HepG2 (cell line): ENCODE measurements at regions of chr17 and their contacts with region 1.

Region 1: GRCh38 chr17:2821868-2822267 is 25.6 kb downstream of the RAP1GAP2 start:
- DNase-seq: no peak
- ATAC-seq: no peak
- H3K4me3 ChIP-seq: no peak overlapping the region
- H3K27ac ChIP-seq: no peak overlapping the region
- H3K4me1 ChIP-seq: no peaks in the 10 kb centered on the region
- H3K27me3 ChIP-seq: no peaks in the 10 kb centered on the region
- CTCF ChIP-seq: no peak
- EP300 ChIP-seq: no peak
- POLR2A ChIP-seq: no peak
- RAD21 ChIP-seq: no peak

Region 2: DNA sequence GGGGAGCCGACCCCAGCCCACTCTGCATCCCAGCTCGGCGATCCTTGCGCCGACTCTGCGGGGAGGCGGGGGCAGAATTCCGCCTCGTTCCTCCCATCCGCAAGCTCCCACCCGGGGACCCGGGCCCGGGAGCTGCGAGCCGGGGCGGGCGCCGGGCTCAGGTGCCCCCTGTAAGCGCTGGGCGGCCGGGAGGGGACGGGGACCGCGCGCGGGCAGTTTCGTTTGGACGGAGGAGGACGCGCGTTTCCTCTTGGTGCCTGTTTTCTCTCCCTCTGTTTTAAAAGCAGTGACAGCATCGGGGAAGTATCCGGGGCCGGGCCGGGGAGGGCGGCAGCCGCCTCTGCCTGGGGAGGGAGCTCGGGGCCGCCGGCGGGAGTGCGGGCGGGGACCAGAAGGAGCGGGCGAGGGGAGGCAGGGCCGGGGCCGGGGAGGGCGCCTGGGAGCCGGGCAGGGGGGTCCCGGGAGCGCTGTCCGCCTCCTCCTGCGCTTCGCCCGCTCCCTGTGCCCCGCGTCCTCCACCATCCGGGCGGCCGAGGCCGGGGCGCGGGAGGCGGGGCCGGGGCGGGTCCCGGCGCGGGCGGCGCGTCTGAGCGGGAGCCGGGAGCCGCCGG is 31.3 kb after region 1 on chr17:
- CTCF ChIA-PET with region 1: no interaction called
- POLR2A ChIA-PET with region 1: no interaction called
- in situ Hi-C with region 1: no loop called
- intact Hi-C with region 1: loop called (anchors 2 kb)
- DNase-seq: no peak
- ATAC-seq: peak; percentile 18
- H3K4me3 ChIP-seq: peak overlapping the region; percentile 32 to 73 (median 61); a peak in 4 of 6 replicates
- H3K27ac ChIP-seq: no peak overlapping the region
- H3K4me1 ChIP-seq: peaks cover 28% of the 10 kb centered on the region
- H3K27me3 ChIP-seq: peaks cover 2 to 14% of the 10 kb centered on the region in 2 experiments; a peak in 4 of 5 replicates
- CTCF ChIP-seq: no peak
- EP300 ChIP-seq: no peak
- POLR2A ChIP-seq: no peak
- RAD21 ChIP-seq: no peak

Region 3: DNA sequence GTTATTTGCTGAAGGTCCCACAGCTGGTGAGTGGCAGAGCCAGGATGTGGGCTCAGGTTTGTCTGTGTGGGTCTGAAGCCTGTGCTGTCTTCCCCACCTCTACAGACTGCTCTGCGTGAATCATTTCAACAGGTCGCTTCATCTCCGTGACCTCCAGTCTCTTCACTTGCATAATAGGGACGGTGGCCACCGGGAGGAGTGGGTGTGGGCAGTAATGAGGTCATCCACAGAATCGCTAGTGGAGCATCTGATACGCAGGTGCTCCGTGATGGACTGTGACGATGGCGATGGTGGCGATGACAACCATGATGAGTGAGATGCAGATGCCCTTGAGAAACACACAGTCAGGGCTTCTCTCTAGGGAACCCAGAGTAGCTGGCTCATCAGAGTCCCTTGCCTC is 94.6 kb after region 1 on chr17:
- CTCF ChIA-PET with region 1: no interaction called
- POLR2A ChIA-PET with region 1: no interaction called
- in situ Hi-C with region 1: no loop called
- intact Hi-C with region 1: no loop called
- DNase-seq: no peak
- ATAC-seq: no peak
- H3K4me3 ChIP-seq: no peak overlapping the region
- H3K27ac ChIP-seq: no peak overlapping the region
- H3K4me1 ChIP-seq: no peaks in the 10 kb centered on the region
- H3K27me3 ChIP-seq: no peaks in the 10 kb centered on the region
- CTCF ChIP-seq: no peak
- EP300 ChIP-seq: no peak
- POLR2A ChIP-seq: no peak
- RAD21 ChIP-seq: no peak